ENCODE measurements at regions of chr1 and their contacts with region 1.

Region 1: DNA sequence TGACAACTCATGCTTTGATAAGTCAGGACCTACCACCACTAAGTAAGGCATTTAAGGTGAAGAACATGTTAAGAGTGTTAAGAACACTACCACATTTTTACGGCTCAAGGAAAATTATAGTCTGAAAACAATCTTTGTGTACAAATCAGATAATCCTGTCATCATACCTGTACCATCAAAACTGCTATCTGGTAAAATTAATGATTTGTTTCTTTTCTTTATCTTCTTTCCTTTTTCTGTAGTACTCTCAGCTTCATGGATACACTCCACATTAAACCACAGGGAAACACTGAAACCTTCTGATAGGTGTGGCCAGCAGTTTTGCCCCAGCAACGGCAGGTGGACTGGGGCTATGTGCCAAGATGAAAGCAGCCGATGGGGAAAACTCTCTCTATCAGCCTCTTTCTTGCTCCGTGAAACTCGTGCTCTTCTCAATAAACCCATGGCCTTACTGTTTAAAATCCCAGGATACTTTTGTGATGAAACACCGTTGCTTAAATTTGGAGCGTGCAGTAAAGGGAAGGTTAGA is 75.1 kb downstream of the LYST start:
- DNase-seq: no peak
- ATAC-seq: no peak
- H3K4me3 ChIP-seq: no peak overlapping the region
- H3K27ac ChIP-seq: no peak overlapping the region
- H3K4me1 ChIP-seq: no peaks in the 10 kb centered on the region
- H3K27me3 ChIP-seq: no peaks in the 10 kb centered on the region
- CTCF ChIP-seq: no peak
- EP300 ChIP-seq: no peak
- POLR2A ChIP-seq: no peak
- RAD21 ChIP-seq: no peak

Region 2: DNA sequence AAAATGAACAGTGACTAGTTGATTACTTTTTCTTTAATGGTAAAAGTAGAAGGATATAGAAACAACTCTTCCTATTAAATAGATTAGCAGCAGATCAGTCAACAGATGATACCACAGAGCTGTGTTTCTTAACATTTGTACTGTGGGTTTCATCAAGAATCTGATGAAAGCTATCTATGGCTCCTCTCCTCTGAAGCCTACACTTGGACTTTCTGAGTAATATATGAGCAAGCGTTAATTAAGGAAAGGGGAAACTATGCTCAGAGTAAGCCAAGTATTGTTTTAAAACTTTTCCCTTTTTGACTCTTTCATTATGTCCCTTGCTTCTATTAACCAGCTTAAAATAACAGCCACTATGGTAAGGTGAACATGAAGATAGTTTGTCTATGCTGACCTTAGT is 474.4 kb before region 1 on chr1:
- CTCF ChIA-PET with region 1: no interaction called
- POLR2A ChIA-PET with region 1: no interaction called
- RAD21 ChIA-PET with region 1: no interaction called
- SMC1A ChIA-PET with region 1: no interaction called
- in situ Hi-C with region 1: no loop called
- intact Hi-C with region 1: no loop called
- DNase-seq: no peak
- ATAC-seq: peak; percentile 70
- H3K4me3 ChIP-seq: no peak overlapping the region
- H3K27ac ChIP-seq: no peak overlapping the region
- H3K4me1 ChIP-seq: peaks cover 6% of the 10 kb centered on the region; the same call in 1 of the 2 replicates
- H3K27me3 ChIP-seq: no peaks in the 10 kb centered on the region
- CTCF ChIP-seq: no peak
- EP300 ChIP-seq: no peak
- POLR2A ChIP-seq: no peak
- RAD21 ChIP-seq: no peak

Region 3: DNA sequence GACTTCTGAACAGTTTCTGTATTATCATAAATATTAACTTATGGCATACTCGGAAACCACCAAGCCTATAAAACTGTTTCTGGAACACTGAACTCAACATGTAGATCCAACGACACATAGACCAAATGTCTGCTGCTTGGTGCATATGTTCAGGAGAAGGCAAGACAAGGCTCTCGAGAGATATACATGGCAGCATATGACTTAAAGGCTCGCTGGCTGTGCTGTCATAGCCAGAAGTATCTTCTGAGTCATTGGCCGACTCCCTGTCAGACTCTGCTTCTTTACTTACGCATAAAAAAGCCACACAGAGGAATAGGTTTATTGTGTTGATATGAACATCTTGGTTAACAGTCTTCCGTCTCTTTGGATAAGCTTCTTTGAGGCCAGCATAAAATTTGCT is 14.5 kb after region 1 on chr1:
- CTCF ChIA-PET with region 1: interaction called, 7 read pairs
- POLR2A ChIA-PET with region 1: no interaction called
- RAD21 ChIA-PET with region 1: no interaction called
- SMC1A ChIA-PET with region 1: interaction called, 13 read pairs
- in situ Hi-C with region 1: no loop called
- intact Hi-C with region 1: no loop called
- DNase-seq: no peak
- ATAC-seq: no peak
- H3K4me3 ChIP-seq: no peak overlapping the region
- H3K27ac ChIP-seq: no peak overlapping the region
- H3K4me1 ChIP-seq: no peaks in the 10 kb centered on the region
- H3K27me3 ChIP-seq: no peaks in the 10 kb centered on the region
- CTCF ChIP-seq: no peak
- EP300 ChIP-seq: no peak
- POLR2A ChIP-seq: no peak
- RAD21 ChIP-seq: no peak